ENCODE measurements at regions of chr5 and their contacts with region 1.

Region 1: GRCh38 chr5:31186672-31187267 is 6.7 kb upstream of the CDH6 start:
- DNase-seq: peak; percentile 29
- CTCF ChIP-seq: peak; percentile 67

Region 2: GRCh38 chr5:30040488-30041118 is 1146.2 kb before region 1 on chr5:
- CTCF ChIA-PET with region 1: interaction called, 18 read pairs
- POLR2A ChIA-PET with region 1: no interaction called
- DNase-seq: peak; percentile 15
- CTCF ChIP-seq: peak; percentile 64

Region 3: GRCh38 chr5:31211098-31211497 is 24.3 kb after region 1 on chr5:
- CTCF ChIA-PET with region 1: interaction called, 14 read pairs
- POLR2A ChIA-PET with region 1: no interaction called
- DNase-seq: no peak
- CTCF ChIP-seq: no peak

Region 4: GRCh38 chr5:31232273-31232888 is 45.6 kb after region 1 on chr5:
- CTCF ChIA-PET with region 1: interaction called, 10 read pairs
- POLR2A ChIA-PET with region 1: no interaction called
- DNase-seq: peak; percentile 30
- CTCF ChIP-seq: peak; percentile 68

Measured in GM10248 (cell line).